Activated CD4-positive, alpha-beta T cell treated with anti-CD3 and anti-CD28 coated beads for 36 hours (primary cell): ENCODE measurements at regions of chr1 and their contacts with region 1.

Region 1: DNA sequence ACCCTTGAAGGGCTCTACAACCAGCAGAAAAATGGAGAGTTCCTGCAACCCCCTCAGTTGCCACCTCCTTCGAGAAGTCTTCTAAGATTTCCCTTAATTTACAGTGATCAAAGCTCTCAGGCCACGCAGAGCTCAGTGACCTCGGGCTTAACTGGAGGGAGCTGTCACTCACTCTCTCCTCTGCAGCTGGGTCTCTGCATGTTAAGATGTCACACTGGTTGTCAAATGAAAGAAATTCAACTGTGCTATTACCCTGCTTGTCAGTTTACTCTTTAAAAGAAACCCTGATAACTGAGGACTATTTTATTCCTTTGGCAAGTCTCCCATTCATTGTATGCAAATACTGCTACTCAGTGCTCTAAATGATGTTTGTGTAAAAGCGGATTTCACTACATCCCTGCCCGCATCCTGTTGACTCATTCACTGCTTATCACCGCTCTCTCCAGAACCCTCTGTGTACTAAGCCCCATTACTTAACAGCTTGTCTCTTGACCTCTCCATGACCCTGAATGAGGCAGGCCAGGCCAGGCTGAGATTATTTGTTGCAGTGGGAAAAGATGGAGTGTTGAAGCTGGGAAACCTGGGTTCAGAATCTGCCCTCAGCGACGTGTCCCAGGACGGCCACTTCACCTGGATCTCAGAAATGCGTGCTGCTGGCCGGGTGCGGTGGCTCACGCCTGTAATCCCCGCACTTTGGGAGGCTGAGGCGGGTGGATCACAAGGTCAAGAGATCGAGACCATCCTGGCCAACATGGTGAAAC is 13.7 kb downstream of the DHRS3 start:
- DNase-seq: peak; percentile 85
- ATAC-seq: peak; percentile 97
- H3K4me3 Mint-ChIP-seq: peak overlapping the region; percentile 21
- H3K27ac Mint-ChIP-seq: peak overlapping the region; percentile 74
- H3K4me1 Mint-ChIP-seq: peaks cover 49% of the 10 kb centered on the region
- H3K27me3 Mint-ChIP-seq: no peaks in the 10 kb centered on the region

Region 2: GRCh38 chr1:12518931-12519692 is 85.2 kb before region 1 on chr1:
- CTCF ChIA-PET with region 1: no interaction called
- POLR2A ChIA-PET with region 1: no interaction called
- intact Hi-C with region 1: loop called (anchors 1 to 5 kb)
- DNase-seq: peak; percentile 82
- ATAC-seq: peak; percentile 98
- H3K4me3 Mint-ChIP-seq: no peak overlapping the region
- H3K27ac Mint-ChIP-seq: peak overlapping the region; percentile 59
- H3K4me1 Mint-ChIP-seq: peaks cover 34% of the 10 kb centered on the region
- H3K27me3 Mint-ChIP-seq: no peaks in the 10 kb centered on the region